ENCODE measurements at regions of chr16 and their contacts with region 1.

Region 1: DNA sequence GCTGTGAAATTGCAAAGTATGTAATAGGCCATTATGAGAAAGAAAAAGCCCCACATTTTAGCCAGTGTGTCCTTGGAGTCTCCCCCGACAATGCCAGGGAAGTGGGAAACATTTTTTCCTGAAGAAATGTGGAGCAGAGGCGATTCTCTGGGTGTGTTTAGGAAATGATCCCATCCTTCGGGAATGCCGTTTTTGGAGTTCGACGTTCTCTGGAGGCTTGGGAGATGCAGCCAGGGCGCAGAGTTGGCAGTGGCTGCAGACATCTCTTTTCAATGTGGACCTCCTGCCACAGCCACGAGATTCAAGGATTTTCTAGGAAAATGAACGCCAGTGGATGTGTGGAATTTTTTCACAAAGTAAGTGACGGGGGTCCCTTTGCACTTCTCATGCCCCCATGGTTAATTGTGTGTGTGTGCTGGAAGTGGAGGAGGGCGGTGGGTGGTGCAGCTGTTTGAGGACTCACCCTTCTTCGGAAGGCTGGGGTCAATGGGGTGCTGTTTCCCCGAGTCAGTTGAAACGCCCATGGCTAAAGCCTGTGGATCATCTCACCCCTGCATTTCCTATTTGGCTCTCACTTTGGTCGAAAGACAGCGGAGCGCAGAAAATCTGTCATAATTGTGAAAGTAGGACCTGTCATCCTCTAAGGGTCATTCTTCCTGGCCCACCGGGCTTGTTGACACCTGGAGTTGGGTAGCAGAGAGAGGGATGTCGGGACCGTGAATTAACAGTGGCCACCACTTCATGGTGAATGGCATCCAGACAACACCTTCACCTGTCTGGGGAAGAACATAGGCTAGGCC is 73.2 kb downstream of the CMIP start:
- DNase-seq: no peak
- ATAC-seq: peak in 3 of 8 donors; percentile 8 to 29 (median 28)
- H3K4me3 ChIP-seq: peak overlapping the region in 1 of 10 donors; percentile 18
- H3K27ac ChIP-seq: peak overlapping the region in 8 of 10 donors; percentile 25 to 77 (median 46)
- H3K4me1 ChIP-seq: peaks cover 0 to 72% (median 57%) of the 10 kb centered on the region in 9 donors
- H3K27me3 ChIP-seq: no peaks in the 10 kb centered on the region
- CTCF ChIP-seq: no peak

Region 2: GRCh38 chr16:81481207-81481821 is 36.5 kb before region 1 on chr16:
- intact Hi-C with region 1: loop called in 1 of 10 experiments (anchors 1 kb)
- DNase-seq: peak; percentile 51 to 55
- ATAC-seq: peak; percentile 43 to 73 (median 57)
- H3K4me3 ChIP-seq: no peak overlapping the region
- H3K27ac ChIP-seq: peak overlapping the region in 5 of 10 donors; percentile 44 to 87 (median 57)
- H3K4me1 ChIP-seq: peaks cover 2 to 95% (median 66%) of the 10 kb centered on the region in 9 donors
- H3K27me3 ChIP-seq: no peaks in the 10 kb centered on the region
- CTCF ChIP-seq: no peak